ENCODE measurements at regions of chr7 and their contacts with region 1.

Region 1: DNA sequence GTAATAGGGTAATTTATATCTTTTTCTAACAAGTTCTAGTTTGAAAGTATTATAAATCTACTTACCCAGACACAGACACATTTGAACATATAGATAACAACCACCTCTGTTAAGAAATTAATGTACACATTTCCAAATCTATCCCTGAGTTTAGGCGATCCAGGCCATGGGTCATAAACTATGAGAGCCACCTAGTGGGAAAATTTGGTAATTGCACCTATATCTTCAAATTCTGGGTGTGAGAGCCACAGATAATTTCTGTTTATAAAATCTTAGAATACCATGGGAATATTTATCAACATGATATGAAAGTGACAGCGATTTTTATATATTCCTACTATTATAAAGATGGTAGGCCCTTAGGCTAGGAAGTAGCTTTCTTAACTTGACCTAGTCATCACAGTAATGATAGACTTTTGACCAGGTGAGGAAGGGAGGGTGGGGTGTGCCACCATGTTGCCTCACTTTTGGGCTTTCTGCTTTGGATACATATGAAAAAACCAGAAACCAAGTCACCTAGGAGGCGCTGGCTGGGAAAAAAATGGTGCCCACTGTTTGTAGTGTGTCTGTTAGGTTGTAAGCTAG is 8.0 kb upstream of the EPHA1 start:
- DNase-seq: no peak
- H3K4me3 ChIP-seq: no peak overlapping the region
- H3K27ac ChIP-seq: no peak overlapping the region
- H3K4me1 ChIP-seq: peaks cover 3 to 4% of the 10 kb centered on the region in 2 donors
- H3K27me3 ChIP-seq: no peaks in the 10 kb centered on the region
- CTCF ChIP-seq: peak; percentile 65 to 81 (median 73)

Region 2: DNA sequence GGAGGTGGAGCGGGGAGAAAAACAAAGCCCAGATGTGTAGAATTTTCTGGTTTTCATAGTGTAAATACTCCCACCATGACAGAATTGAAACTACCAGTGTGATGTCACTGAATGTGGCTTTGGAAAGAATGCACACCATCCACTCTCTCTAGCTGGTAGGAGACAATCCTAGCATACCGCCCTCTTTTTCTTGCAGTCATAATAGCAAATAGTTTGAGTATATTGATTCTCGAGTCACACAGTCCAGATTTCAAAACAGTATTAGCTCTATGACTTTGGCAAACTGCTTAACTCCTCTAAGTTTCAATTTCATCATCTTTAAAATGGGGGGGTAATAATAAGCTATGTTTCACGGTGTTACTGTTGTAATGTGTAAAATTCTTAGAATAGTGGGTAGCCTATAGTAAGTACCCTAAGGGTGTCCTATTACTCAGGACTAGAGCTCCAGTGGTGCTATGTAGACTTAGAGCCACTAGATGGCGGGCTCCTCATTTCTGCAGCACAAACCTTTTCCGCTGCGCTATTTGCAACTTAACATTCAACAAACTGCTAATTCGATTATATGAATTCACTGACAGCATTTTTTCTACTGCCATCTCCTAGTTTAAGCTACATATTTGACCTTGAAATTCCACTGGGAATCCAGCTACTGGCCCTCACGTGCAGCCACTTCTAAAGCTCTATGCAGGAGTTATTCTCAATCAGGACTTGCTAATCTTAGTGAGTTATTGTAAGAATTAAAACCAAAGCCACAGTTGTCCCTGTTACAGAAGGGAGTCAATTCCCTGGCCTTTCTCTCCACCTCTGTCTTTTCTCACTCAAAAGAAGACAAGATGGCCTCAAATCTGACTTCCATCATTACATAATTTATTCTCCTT is 176.1 kb before region 1 on chr7:
- intact Hi-C with region 1: loop called (anchors 2 kb)
- DNase-seq: peak in 1 of 2 donors; percentile 78
- H3K4me3 ChIP-seq: no peak overlapping the region
- H3K27ac ChIP-seq: no peak overlapping the region
- H3K4me1 ChIP-seq: no peaks in the 10 kb centered on the region
- H3K27me3 ChIP-seq: no peaks in the 10 kb centered on the region
- CTCF ChIP-seq: peak; percentile 60 to 91 (median 83)

Region 3: GRCh38 chr7:143305423-143306070 is 111.1 kb before region 1 on chr7:
- intact Hi-C with region 1: loop called (anchors 5 kb)
- DNase-seq: no peak
- H3K4me3 ChIP-seq: no peak overlapping the region
- H3K27ac ChIP-seq: no peak overlapping the region
- H3K4me1 ChIP-seq: no peaks in the 10 kb centered on the region
- H3K27me3 ChIP-seq: no peaks in the 10 kb centered on the region
- CTCF ChIP-seq: peak; percentile 35 to 67 (median 60)

Region 4: DNA sequence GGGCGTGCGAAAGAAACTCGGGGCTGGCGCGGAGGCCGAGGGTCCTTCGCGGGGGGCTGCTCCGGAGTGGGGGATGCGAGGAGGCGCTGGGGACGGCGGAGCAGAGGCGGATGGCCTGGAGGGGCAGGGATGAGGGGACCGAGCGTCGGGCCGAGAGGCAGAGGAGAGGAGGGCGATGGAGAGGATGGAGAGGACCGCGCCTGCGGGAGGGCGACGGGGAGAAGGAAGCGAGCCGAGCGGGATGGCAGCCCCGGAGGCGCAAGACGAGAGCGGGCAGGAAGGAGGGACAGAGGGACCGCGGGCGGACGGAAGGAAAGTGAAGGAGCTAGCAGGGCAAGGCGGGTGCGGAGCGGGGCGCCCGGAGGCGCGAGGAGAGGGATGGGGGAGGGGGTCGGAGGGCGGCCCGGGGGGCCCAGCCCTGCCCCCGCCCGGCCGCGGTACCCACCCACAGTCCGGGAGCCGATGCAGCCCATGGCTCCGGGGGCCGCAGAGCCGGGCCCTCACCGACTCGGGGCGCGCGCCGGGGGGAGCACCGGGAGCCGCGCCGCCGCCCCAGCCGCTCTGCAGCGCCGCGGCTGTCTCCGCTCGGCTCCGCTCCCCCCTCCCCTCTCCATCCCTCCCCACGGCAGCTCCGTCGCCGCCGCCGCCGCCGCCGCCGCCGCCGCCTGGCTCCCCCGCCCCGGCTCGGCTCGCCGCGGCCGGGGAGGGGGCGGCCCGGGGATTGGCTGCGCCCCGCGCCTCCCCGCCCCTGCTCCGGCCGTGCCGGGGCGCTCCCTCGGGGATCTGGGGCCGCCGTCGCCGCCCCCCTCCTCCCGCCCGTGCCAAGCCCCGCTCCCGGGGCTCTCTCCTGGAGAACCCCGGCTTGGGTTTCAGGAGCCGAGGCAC is 54.3 kb before region 1 on chr7 and contains the start of gene FAM131B:
- intact Hi-C with region 1: loop called (anchors 5 kb)
- DNase-seq: no peak
- H3K4me3 ChIP-seq: peak within 1 kb of the TSS; percentile 69 to 79
- H3K27ac ChIP-seq: no peak within 1 kb of the TSS
- H3K4me1 ChIP-seq: peaks cover 0 to 8% of the 10 kb centered on the region in 2 donors
- H3K27me3 ChIP-seq: no peaks in the 10 kb centered on the region
- CTCF ChIP-seq: no peak
- total RNA-seq, gene FAM131B: 0.53 TPM

Measured in ascending aorta (tissue), 2 donors.